ENCODE measurements at regions of chr11 and their contacts with region 1.

Region 1: GRCh38 chr11:122853971-122854446 is 15.7 kb downstream of the CRTAM start:
- DNase-seq: peak in 5 of 9 experiments; percentile 41 to 85 (median 65)
- ATAC-seq: no peak
- H3K4me3 ChIP-seq: no peak overlapping the region
- H3K4me3 Mint-ChIP-seq: no peak overlapping the region
- H3K27ac ChIP-seq: no peak overlapping the region
- H3K27ac Mint-ChIP-seq: peak overlapping the region; percentile 93
- H3K4me1 ChIP-seq: peaks cover 57% of the 10 kb centered on the region
- H3K4me1 Mint-ChIP-seq: peaks cover 61% of the 10 kb centered on the region
- H3K27me3 ChIP-seq: no peaks in the 10 kb centered on the region
- H3K27me3 Mint-ChIP-seq: no peaks in the 10 kb centered on the region
- CTCF ChIP-seq: peak; percentile 78

Region 2: DNA sequence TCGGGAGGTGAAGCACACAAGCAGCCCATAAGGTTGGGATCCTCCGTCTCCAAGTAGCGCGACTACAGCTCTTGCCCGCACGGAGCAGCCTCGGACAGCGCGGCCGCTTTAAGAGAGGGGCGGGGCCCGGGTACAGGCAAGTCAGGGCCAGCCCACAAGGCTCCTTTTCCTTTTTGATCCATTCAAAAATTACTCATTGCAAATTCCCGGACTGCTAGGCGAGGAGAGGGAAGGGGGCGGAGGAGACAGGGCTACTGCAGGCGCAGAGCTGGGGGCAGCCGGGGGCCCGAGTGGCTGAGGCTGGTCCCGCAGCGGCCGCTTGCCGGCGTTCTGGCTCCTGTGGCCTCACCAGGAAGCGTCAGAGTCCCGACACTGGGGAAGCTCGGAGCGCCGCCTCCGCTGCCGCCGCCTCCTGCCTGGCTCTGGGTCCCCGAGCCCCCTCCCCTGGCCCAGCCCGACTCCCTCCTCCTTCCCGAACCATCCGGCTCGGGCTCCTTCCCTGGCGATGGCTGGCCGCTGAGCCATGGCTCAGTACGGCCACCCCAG is 198.4 kb before region 1 on chr11 and contains the start of gene UBASH3B:
- CTCF ChIA-PET with region 1: interaction called, 3 read pairs
- POLR2A ChIA-PET with region 1: no interaction called
- intact Hi-C with region 1: loop called (anchors 5 to 10 kb)
- DNase-seq: peak; percentile 10 to 75 (median 57)
- ATAC-seq: peak; percentile 72
- H3K4me3 ChIP-seq: peak within 1 kb of the TSS; percentile 96 to 97
- H3K4me3 Mint-ChIP-seq: peak within 1 kb of the TSS; percentile 99
- H3K27ac ChIP-seq: peak within 1 kb of the TSS; percentile 61 to 71
- H3K27ac Mint-ChIP-seq: peak within 1 kb of the TSS; percentile 93
- H3K4me1 ChIP-seq: peaks cover 44% of the 10 kb centered on the region
- H3K4me1 Mint-ChIP-seq: peaks cover 46% of the 10 kb centered on the region
- H3K27me3 ChIP-seq: peaks cover 0 to 2% of the 10 kb centered on the region in 2 experiments
- H3K27me3 Mint-ChIP-seq: no peaks in the 10 kb centered on the region
- CTCF ChIP-seq: no peak
- total RNA-seq, gene UBASH3B: 16.7 to 19.3 TPM

Region 3: DNA sequence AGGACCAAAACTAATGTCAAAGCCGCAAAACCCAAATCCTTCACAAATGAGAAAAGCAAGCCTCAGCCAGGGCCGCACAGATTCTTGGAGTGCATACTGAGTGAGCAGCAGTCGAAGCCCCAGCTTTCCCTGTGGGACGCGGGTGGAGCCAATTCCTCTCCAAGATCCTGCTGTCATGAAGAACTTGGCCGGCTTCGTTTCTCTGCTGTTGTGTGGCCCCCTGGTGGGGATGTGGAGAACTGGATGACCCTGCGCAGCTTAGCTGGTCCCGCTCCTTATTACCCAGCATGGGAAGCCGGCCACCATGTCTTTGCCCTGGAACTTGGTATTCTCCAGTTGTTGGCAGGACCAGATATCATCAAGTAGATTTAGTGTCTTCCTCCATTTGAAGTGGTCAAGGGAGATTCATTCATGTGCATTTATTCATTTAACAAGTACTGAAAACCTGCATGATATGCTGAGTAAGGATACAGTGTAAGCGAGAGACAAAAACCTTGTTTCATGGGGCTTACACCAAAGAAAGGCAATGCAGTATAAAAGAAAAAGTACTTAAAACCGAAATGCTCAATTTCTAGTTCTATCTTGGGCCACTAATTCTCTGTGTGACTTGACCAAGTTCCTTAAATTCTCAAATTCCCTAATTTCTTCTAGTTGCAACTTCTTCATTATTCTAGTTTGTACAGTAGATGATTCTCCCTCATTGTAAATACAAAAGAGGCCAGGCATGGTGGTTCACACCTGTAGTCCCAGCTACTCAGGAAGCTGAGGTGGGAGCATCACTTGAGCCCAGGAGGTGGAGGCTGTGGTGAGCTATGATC is 72.4 kb before region 1 on chr11:
- CTCF ChIA-PET with region 1: interaction called, 472 read pairs
- POLR2A ChIA-PET with region 1: no interaction called
- intact Hi-C with region 1: no loop called
- DNase-seq: peak; percentile 48 to 85 (median 76)
- ATAC-seq: peak; percentile 86
- H3K4me3 ChIP-seq: no peak overlapping the region
- H3K4me3 Mint-ChIP-seq: no peak overlapping the region
- H3K27ac ChIP-seq: no peak overlapping the region
- H3K27ac Mint-ChIP-seq: no peak overlapping the region
- H3K4me1 ChIP-seq: no peaks in the 10 kb centered on the region
- H3K4me1 Mint-ChIP-seq: peaks cover 2% of the 10 kb centered on the region
- H3K27me3 ChIP-seq: no peaks in the 10 kb centered on the region
- H3K27me3 Mint-ChIP-seq: no peaks in the 10 kb centered on the region
- CTCF ChIP-seq: peak; percentile 88

Region 4: GRCh38 chr11:122814401-122814800 is 39.6 kb before region 1 on chr11:
- CTCF ChIA-PET with region 1: interaction called, 191 read pairs
- POLR2A ChIA-PET with region 1: interaction called, 6 read pairs
- intact Hi-C with region 1: loop called (anchors 1 kb)
- DNase-seq: peak in 3 of 9 experiments; percentile 10 to 57 (median 44)
- ATAC-seq: no peak
- H3K4me3 ChIP-seq: no peak overlapping the region
- H3K4me3 Mint-ChIP-seq: no peak overlapping the region
- H3K27ac ChIP-seq: no peak overlapping the region
- H3K27ac Mint-ChIP-seq: no peak overlapping the region
- H3K4me1 ChIP-seq: peaks cover 27% of the 10 kb centered on the region
- H3K4me1 Mint-ChIP-seq: peaks cover 49% of the 10 kb centered on the region
- H3K27me3 ChIP-seq: no peaks in the 10 kb centered on the region
- H3K27me3 Mint-ChIP-seq: no peaks in the 10 kb centered on the region
- CTCF ChIP-seq: peak; percentile 25

Region 5: GRCh38 chr11:122933416-122933815 is 79.4 kb after region 1 on chr11:
- CTCF ChIA-PET with region 1: no interaction called
- POLR2A ChIA-PET with region 1: no interaction called
- intact Hi-C with region 1: no loop called
- DNase-seq: no peak
- ATAC-seq: no peak
- H3K4me3 ChIP-seq: no peak overlapping the region
- H3K4me3 Mint-ChIP-seq: no peak overlapping the region
- H3K27ac ChIP-seq: no peak overlapping the region
- H3K27ac Mint-ChIP-seq: no peak overlapping the region
- H3K4me1 ChIP-seq: no peaks in the 10 kb centered on the region
- H3K4me1 Mint-ChIP-seq: no peaks in the 10 kb centered on the region
- H3K27me3 ChIP-seq: no peaks in the 10 kb centered on the region
- H3K27me3 Mint-ChIP-seq: no peaks in the 10 kb centered on the region
- CTCF ChIP-seq: no peak

Region 6: DNA sequence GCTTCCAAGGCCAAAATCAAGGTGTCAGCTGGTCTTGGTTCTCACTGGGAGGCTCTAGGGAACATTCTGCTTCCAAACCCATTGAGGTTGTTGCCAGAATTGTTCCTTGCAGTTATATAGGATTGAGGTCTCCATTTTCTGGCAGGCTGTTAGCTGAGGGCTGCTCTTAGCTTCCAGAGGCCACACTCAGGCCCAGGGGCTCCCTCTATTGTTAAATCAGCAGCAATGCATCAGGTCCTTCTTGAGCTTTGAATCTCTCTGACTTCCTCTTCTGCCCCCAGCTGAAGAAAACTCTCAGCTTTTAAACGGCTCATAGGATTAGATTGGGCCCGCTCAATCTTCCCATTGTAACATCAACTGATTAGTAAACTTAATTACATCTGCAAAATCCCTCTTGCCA is 167.0 kb after region 1 on chr11:
- CTCF ChIA-PET with region 1: interaction called, 13 read pairs
- POLR2A ChIA-PET with region 1: no interaction called
- intact Hi-C with region 1: no loop called
- DNase-seq: peak in 5 of 9 experiments; percentile 5 to 61 (median 20)
- ATAC-seq: peak; percentile 77
- H3K4me3 ChIP-seq: no peak overlapping the region
- H3K4me3 Mint-ChIP-seq: no peak overlapping the region
- H3K27ac ChIP-seq: no peak overlapping the region
- H3K27ac Mint-ChIP-seq: no peak overlapping the region
- H3K4me1 ChIP-seq: no peaks in the 10 kb centered on the region
- H3K4me1 Mint-ChIP-seq: peaks cover 7% of the 10 kb centered on the region
- H3K27me3 ChIP-seq: peaks cover 0 to 2% of the 10 kb centered on the region in 2 experiments
- H3K27me3 Mint-ChIP-seq: peaks cover 2% of the 10 kb centered on the region
- CTCF ChIP-seq: peak; percentile 55

Region 7: GRCh38 chr11:123511037-123511870 is 657.2 kb after region 1 on chr11:
- CTCF ChIA-PET with region 1: no interaction called
- POLR2A ChIA-PET with region 1: no interaction called
- intact Hi-C with region 1: no loop called
- DNase-seq: peak; percentile 20 to 78 (median 56)
- ATAC-seq: peak; percentile 87
- H3K4me3 ChIP-seq: no peak overlapping the region
- H3K4me3 Mint-ChIP-seq: no peak overlapping the region
- H3K27ac ChIP-seq: no peak overlapping the region
- H3K27ac Mint-ChIP-seq: no peak overlapping the region
- H3K4me1 ChIP-seq: no peaks in the 10 kb centered on the region
- H3K4me1 Mint-ChIP-seq: peaks cover 6% of the 10 kb centered on the region
- H3K27me3 ChIP-seq: no peaks in the 10 kb centered on the region
- H3K27me3 Mint-ChIP-seq: no peaks in the 10 kb centered on the region
- CTCF ChIP-seq: peak; percentile 86

Region 8: GRCh38 chr11:124167826-124168231 is 1313.8 kb after region 1 on chr11:
- CTCF ChIA-PET with region 1: no interaction called
- POLR2A ChIA-PET with region 1: no interaction called
- intact Hi-C with region 1: no loop called
- DNase-seq: no peak
- ATAC-seq: no peak
- H3K4me3 ChIP-seq: no peak overlapping the region
- H3K4me3 Mint-ChIP-seq: no peak overlapping the region
- H3K27ac ChIP-seq: no peak overlapping the region
- H3K27ac Mint-ChIP-seq: no peak overlapping the region
- H3K4me1 ChIP-seq: no peaks in the 10 kb centered on the region
- H3K4me1 Mint-ChIP-seq: no peaks in the 10 kb centered on the region
- H3K27me3 ChIP-seq: no peaks in the 10 kb centered on the region
- H3K27me3 Mint-ChIP-seq: peaks cover 12% of the 10 kb centered on the region
- CTCF ChIP-seq: no peak